Mammary epithelial cell (primary cell): ENCODE measurements at regions of chr10 and their contacts with region 1.

Region 1: GRCh38 chr10:72503241-72503640 is 122.6 kb downstream of the MICU1 start:
- DNase-seq: no peak
- H3K4me3 ChIP-seq: no peak overlapping the region
- H3K27ac ChIP-seq: no peak overlapping the region
- H3K4me1 ChIP-seq: no peaks in the 10 kb centered on the region
- H3K27me3 ChIP-seq: no peaks in the 10 kb centered on the region
- CTCF ChIP-seq: no peak

Region 2: GRCh38 chr10:72162978-72163377 is 340.3 kb before region 1 on chr10:
- CTCF ChIA-PET with region 1: no interaction called
- dilution Hi-C with region 1: no loop called
- in situ Hi-C with region 1: no loop called
- intact Hi-C with region 1: no loop called
- DNase-seq: peak; percentile 91
- H3K4me3 ChIP-seq: no peak overlapping the region
- H3K27ac ChIP-seq: no peak overlapping the region
- H3K4me1 ChIP-seq: no peaks in the 10 kb centered on the region
- H3K27me3 ChIP-seq: no peaks in the 10 kb centered on the region
- CTCF ChIP-seq: no peak

Region 3: GRCh38 chr10:72459301-72459700 is 43.9 kb before region 1 on chr10:
- CTCF ChIA-PET with region 1: no interaction called
- dilution Hi-C with region 1: no loop called
- in situ Hi-C with region 1: no loop called
- intact Hi-C with region 1: no loop called
- DNase-seq: no peak
- H3K4me3 ChIP-seq: no peak overlapping the region
- H3K27ac ChIP-seq: no peak overlapping the region
- H3K4me1 ChIP-seq: no peaks in the 10 kb centered on the region
- H3K27me3 ChIP-seq: no peaks in the 10 kb centered on the region
- CTCF ChIP-seq: no peak

Region 4: GRCh38 chr10:72470666-72471065 is 32.6 kb before region 1 on chr10:
- CTCF ChIA-PET with region 1: interaction called, 20 read pairs
- dilution Hi-C with region 1: no loop called
- in situ Hi-C with region 1: no loop called
- intact Hi-C with region 1: no loop called
- DNase-seq: no peak
- H3K4me3 ChIP-seq: no peak overlapping the region
- H3K27ac ChIP-seq: no peak overlapping the region
- H3K4me1 ChIP-seq: peaks cover 9% of the 10 kb centered on the region
- H3K27me3 ChIP-seq: no peaks in the 10 kb centered on the region
- CTCF ChIP-seq: no peak